PC-9 (cell line): ENCODE measurements at regions of chr1 and their contacts with region 1.

Region 1: DNA sequence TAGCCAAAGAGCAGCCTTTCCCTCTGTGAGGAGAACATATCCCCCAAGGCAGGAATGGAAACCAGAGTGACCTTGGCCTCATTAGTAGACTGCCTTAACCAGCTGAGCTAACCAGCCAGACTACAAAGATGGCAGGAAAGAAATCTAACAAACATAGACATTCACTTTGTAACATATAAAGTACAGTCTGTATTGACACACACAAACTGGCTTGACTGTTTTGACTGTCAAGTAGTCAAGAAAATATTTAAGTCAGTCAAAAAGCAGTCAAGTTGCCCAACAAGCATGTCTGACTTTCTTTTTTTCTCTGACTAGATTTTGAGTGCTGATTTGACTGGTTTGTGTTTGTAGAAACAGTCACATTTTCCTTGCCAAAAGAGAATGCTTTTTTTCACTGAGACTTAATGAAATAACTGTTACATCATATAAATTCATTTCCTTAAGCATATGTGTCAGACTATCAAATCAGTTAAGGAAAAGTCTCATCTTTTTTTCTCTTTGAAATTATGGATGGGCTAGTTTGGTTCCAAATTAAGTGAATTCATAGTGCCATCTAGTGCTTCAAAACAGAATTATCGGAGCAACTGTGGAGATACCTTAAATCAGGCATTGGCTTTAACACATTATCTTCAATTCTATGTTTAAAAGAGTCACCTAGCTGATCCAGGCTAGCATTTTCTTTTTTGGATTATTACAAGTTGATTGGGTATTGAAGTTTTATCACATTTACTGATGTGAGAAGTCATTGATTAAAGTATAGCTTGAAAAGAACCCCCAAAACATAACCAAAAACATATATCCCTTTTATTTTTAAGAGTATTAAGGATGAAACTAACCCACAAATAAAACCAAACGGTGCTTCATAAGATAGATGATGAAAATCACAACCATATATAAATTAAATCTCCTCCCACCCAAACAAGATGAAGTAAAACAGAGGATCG is 75.0 kb downstream of the ATP6V1G3 start:
- DNase-seq: peak in 1 of 2 experiments; percentile 65
- H3K4me3 ChIP-seq: no peak overlapping the region
- H3K27ac ChIP-seq: peak overlapping the region; percentile 8; the same call in 1 of the 2 replicates
- H3K4me1 ChIP-seq: 0 out of 2 replicates have a peak, but pooled peaks cover 3% of the 10 kb centered on the region
- H3K27me3 ChIP-seq: no peaks in the 10 kb centered on the region
- CTCF ChIP-seq: peak; percentile 86

Region 2: GRCh38 chr1:197614916-197615692 is 850.4 kb before region 1 on chr1:
- CTCF ChIA-PET with region 1: interaction called, 3 read pairs
- POLR2A ChIA-PET with region 1: no interaction called
- intact Hi-C with region 1: loop called (anchors 1 kb)
- DNase-seq: peak in 1 of 2 experiments; percentile 17
- H3K4me3 ChIP-seq: no peak overlapping the region
- H3K27ac ChIP-seq: no peak overlapping the region
- H3K4me1 ChIP-seq: no peaks in the 10 kb centered on the region
- H3K27me3 ChIP-seq: no peaks in the 10 kb centered on the region
- CTCF ChIP-seq: peak; percentile 67

Region 3: GRCh38 chr1:197924516-197925123 is 540.9 kb before region 1 on chr1:
- CTCF ChIA-PET with region 1: no interaction called
- POLR2A ChIA-PET with region 1: no interaction called
- intact Hi-C with region 1: loop called (anchors 5 kb)
- DNase-seq: peak in 1 of 2 experiments; percentile 18
- H3K4me3 ChIP-seq: no peak overlapping the region
- H3K27ac ChIP-seq: no peak overlapping the region
- H3K4me1 ChIP-seq: no peaks in the 10 kb centered on the region
- H3K27me3 ChIP-seq: no peaks in the 10 kb centered on the region
- CTCF ChIP-seq: peak; percentile 84

Region 4: GRCh38 chr1:198275597-198275996 is 189.9 kb before region 1 on chr1:
- CTCF ChIA-PET with region 1: no interaction called
- POLR2A ChIA-PET with region 1: no interaction called
- intact Hi-C with region 1: loop called (anchors 10 kb)
- DNase-seq: no peak
- H3K4me3 ChIP-seq: no peak overlapping the region
- H3K27ac ChIP-seq: no peak overlapping the region
- H3K4me1 ChIP-seq: no peaks in the 10 kb centered on the region
- H3K27me3 ChIP-seq: no peaks in the 10 kb centered on the region
- CTCF ChIP-seq: no peak

Region 5: GRCh38 chr1:198681831-198682759 is 216.6 kb after region 1 on chr1:
- CTCF ChIA-PET with region 1: interaction called, 3 read pairs
- POLR2A ChIA-PET with region 1: interaction called, 3 read pairs
- intact Hi-C with region 1: loop called (anchors 1 kb)
- DNase-seq: peak; percentile 66 to 75
- H3K4me3 ChIP-seq: peak overlapping the region; percentile 32; the same call in 1 of the 2 replicates
- H3K27ac ChIP-seq: peak overlapping the region; percentile 55
- H3K4me1 ChIP-seq: peaks cover 11% of the 10 kb centered on the region
- H3K27me3 ChIP-seq: no peaks in the 10 kb centered on the region
- CTCF ChIP-seq: no peak

Region 6: GRCh38 chr1:198798923-198799386 is 333.5 kb after region 1 on chr1:
- CTCF ChIA-PET with region 1: no interaction called
- POLR2A ChIA-PET with region 1: no interaction called
- intact Hi-C with region 1: no loop called
- DNase-seq: no peak
- H3K4me3 ChIP-seq: no peak overlapping the region
- H3K27ac ChIP-seq: no peak overlapping the region
- H3K4me1 ChIP-seq: no peaks in the 10 kb centered on the region
- H3K27me3 ChIP-seq: no peaks in the 10 kb centered on the region
- CTCF ChIP-seq: no peak